ENCODE measurements at regions of chr1 and their contacts with region 1.

Region 1: GRCh38 chr1:156953571-156953970 is 33.1 kb downstream of the LRRC71 start:
- DNase-seq: no peak
- ATAC-seq: no peak
- H3K4me3 Mint-ChIP-seq: no peak overlapping the region
- H3K27ac Mint-ChIP-seq: no peak overlapping the region
- H3K4me1 Mint-ChIP-seq: no peaks in the 10 kb centered on the region
- H3K27me3 Mint-ChIP-seq: peaks cover 2% of the 10 kb centered on the region
- CTCF ChIP-seq: no peak

Region 2: DNA sequence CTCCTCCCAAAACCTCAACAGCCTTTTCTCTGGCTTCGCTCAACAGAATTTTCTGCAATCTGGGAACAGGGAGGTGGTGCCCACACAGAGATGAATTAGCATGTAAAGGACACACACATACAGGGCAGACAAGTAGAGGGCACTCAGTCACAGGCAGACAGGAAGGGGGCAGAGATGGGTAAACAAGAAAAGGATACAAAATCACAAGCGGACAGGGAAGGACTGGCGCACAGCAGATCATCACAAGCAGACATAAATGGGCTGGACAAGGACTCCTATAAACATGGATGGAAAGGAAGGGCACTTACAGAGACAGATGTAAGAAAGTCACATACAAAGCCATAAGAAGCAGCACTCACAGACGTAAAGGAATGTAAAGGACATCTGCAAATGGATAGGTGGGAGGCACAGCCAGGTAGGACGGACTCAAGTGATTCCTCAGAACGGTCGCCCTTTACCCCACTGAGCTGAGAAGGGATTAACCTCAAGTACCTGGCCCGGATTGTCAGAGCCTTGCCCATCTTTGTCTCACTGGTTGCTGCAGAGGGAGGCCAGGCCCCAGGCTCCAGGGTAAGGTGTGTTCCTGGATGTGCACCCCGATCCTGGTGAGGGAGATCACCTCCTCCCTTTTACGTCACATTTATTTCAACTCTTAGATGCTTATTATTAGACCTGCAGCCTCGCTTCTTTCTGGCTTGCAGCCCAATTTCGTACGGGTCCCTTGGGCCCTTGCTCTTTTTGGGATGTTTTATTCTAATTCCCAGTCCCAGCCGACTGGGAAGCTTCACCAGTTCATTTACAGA is 187.1 kb before region 1 on chr1:
- CTCF ChIA-PET with region 1: no interaction called
- POLR2A ChIA-PET with region 1: no interaction called
- intact Hi-C with region 1: no loop called
- DNase-seq: no peak
- ATAC-seq: no peak
- H3K4me3 Mint-ChIP-seq: no peak overlapping the region
- H3K27ac Mint-ChIP-seq: no peak overlapping the region
- H3K4me1 Mint-ChIP-seq: peaks cover 32% of the 10 kb centered on the region
- H3K27me3 Mint-ChIP-seq: no peaks in the 10 kb centered on the region
- CTCF ChIP-seq: no peak

Region 3: GRCh38 chr1:156876281-156876680 is 77.3 kb before region 1 on chr1:
- CTCF ChIA-PET with region 1: no interaction called
- POLR2A ChIA-PET with region 1: no interaction called
- intact Hi-C with region 1: no loop called
- DNase-seq: no peak
- ATAC-seq: no peak
- H3K4me3 Mint-ChIP-seq: no peak overlapping the region
- H3K27ac Mint-ChIP-seq: no peak overlapping the region
- H3K4me1 Mint-ChIP-seq: no peaks in the 10 kb centered on the region
- H3K27me3 Mint-ChIP-seq: peaks cover 33% of the 10 kb centered on the region
- CTCF ChIP-seq: no peak

Region 4: GRCh38 chr1:156941655-156942054 is 11.9 kb before region 1 on chr1:
- CTCF ChIA-PET with region 1: no interaction called
- POLR2A ChIA-PET with region 1: no interaction called
- intact Hi-C with region 1: no loop called
- DNase-seq: no peak
- ATAC-seq: no peak
- H3K4me3 Mint-ChIP-seq: no peak overlapping the region
- H3K27ac Mint-ChIP-seq: no peak overlapping the region
- H3K4me1 Mint-ChIP-seq: no peaks in the 10 kb centered on the region
- H3K27me3 Mint-ChIP-seq: peaks cover 2% of the 10 kb centered on the region
- CTCF ChIP-seq: no peak

Region 5: GRCh38 chr1:157178490-157178889 is 224.9 kb after region 1 on chr1:
- CTCF ChIA-PET with region 1: no interaction called
- POLR2A ChIA-PET with region 1: interaction called, 11 read pairs
- intact Hi-C with region 1: no loop called
- DNase-seq: no peak
- ATAC-seq: no peak
- H3K4me3 Mint-ChIP-seq: no peak overlapping the region
- H3K27ac Mint-ChIP-seq: no peak overlapping the region
- H3K4me1 Mint-ChIP-seq: no peaks in the 10 kb centered on the region
- H3K27me3 Mint-ChIP-seq: peaks cover 16% of the 10 kb centered on the region
- CTCF ChIP-seq: no peak